ENCODE measurements at regions of chr7 and their contacts with region 1.

Region 1: DNA sequence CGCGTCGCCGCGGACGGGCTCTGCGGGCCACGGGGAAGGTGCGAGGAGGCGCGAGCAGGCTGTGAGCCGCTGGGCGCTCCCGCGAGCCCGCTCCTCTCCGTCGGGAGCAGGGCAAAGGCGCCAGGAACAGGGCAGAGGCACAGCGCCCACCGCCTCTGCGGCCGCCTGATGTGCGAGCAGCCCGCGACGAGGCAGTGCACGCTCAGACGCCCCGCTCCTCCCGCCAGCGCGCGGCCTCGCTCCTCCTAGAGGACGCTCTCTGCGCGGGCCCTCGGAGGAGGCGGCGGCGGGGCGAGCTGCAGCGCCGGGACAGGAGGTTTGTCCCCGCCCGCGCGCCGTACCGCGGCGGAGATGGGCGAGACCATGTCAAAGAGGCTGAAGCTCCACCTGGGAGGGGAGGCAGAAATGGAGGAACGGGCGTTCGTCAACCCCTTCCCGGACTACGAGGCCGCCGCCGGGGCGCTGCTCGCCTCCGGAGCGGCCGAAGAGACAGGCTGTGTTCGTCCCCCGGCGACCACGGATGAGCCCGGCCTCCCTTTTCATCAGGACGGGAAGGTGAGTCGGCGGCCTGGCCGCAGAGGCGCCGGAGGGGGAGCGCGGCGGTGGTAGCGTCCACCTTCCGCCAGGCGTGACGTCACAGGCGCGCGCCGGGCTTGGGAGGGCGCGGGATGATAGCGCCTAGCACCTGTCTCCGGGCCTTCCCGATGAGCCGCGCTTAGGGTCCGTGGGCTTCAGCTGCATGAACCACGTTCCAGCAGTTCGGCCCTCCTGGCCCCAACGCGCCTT is 731 bp downstream of the LANCL2 start:
- DNase-seq: peak; percentile 97 to 98
- ATAC-seq: peak; percentile 97 to 98 (median 98)
- H3K4me3 ChIP-seq: peak overlapping the region; percentile 88
- H3K27ac ChIP-seq: peak overlapping the region; percentile 100
- H3K4me1 ChIP-seq: peaks cover 13% of the 10 kb centered on the region
- H3K27me3 ChIP-seq: no peaks in the 10 kb centered on the region
- CTCF ChIP-seq: peak; percentile 29

Region 2: GRCh38 chr7:55280031-55280454 is 85.8 kb before region 1 on chr7:
- intact Hi-C with region 1: loop called in 1 of 2 experiments (anchors 2 kb)
- DNase-seq: peak; percentile 36 to 63
- ATAC-seq: peak; percentile 88 to 98 (median 90)
- H3K4me3 ChIP-seq: no peak overlapping the region
- H3K27ac ChIP-seq: no peak overlapping the region
- H3K4me1 ChIP-seq: no peaks in the 10 kb centered on the region
- H3K27me3 ChIP-seq: no peaks in the 10 kb centered on the region
- CTCF ChIP-seq: peak; percentile 68

Region 3: DNA sequence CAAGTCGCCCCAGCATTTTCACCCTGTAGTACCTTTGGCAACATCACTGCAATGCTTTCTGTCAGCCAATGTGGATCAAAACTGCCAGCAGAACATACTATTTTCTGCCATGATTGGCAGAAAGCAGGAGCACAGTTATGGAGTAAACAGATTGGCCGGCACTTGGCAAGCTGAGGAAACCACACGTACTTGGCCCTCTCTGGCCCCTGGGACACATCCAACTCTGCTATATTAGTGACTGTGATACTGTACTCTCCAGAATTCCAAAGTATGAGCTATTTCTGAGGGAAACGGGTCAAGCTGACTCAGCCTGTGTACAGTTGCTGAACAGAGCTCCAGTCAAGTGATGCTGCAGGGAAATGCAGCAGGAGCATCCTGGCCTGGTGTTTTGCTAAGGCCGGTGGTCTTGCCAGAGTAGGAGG is 40.5 kb before region 1 on chr7:
- intact Hi-C with region 1: loop called in 1 of 2 experiments (anchors 1 kb)
- DNase-seq: peak; percentile 48 to 83
- ATAC-seq: peak; percentile 99 to 100 (median 99)
- H3K4me3 ChIP-seq: no peak overlapping the region
- H3K27ac ChIP-seq: peak overlapping the region; percentile 82
- H3K4me1 ChIP-seq: peaks cover 27% of the 10 kb centered on the region
- H3K27me3 ChIP-seq: no peaks in the 10 kb centered on the region
- CTCF ChIP-seq: no peak

Region 4: GRCh38 chr7:55415173-55415778 is 49.4 kb after region 1 on chr7:
- intact Hi-C with region 1: loop called in 1 of 2 experiments (anchors 2 kb)
- DNase-seq: peak; percentile 78 to 85
- ATAC-seq: peak; percentile 86 to 95 (median 90)
- H3K4me3 ChIP-seq: no peak overlapping the region
- H3K27ac ChIP-seq: no peak overlapping the region
- H3K4me1 ChIP-seq: no peaks in the 10 kb centered on the region
- H3K27me3 ChIP-seq: no peaks in the 10 kb centered on the region
- CTCF ChIP-seq: peak; percentile 91

Region 5: GRCh38 chr7:55509322-55509721 is 143.5 kb after region 1 on chr7:
- intact Hi-C with region 1: no loop called
- DNase-seq: no peak
- ATAC-seq: peak; percentile 26 to 63 (median 58)
- H3K4me3 ChIP-seq: no peak overlapping the region
- H3K27ac ChIP-seq: peak overlapping the region; percentile 39
- H3K4me1 ChIP-seq: peaks cover 45% of the 10 kb centered on the region
- H3K27me3 ChIP-seq: no peaks in the 10 kb centered on the region
- CTCF ChIP-seq: no peak

Measured in psoas muscle (tissue), 8 donors.